Right lobe of liver (tissue), 6 donors: ENCODE measurements at regions of chr14 and their contacts with region 1.

Region 1: GRCh38 chr14:100375963-100376735 is 53.0 kb downstream of the SLC25A47 start:
- DNase-seq: peak; percentile 93 to 97 (median 95)
- ATAC-seq: peak; percentile 84 to 92 (median 92)
- H3K4me3 ChIP-seq: peak within 1 kb of the TSS; percentile 68 to 93 (median 81)
- H3K27ac ChIP-seq: peak within 1 kb of the TSS; percentile 68 to 96 (median 71)
- H3K4me1 ChIP-seq: peaks cover 0 to 18% (median 2%) of the 10 kb centered on the region in 4 donors
- H3K27me3 ChIP-seq: no peaks in the 10 kb centered on the region
- CTCF ChIP-seq: no peak
- POLR2A ChIP-seq: peak; percentile 68

Region 2: GRCh38 chr14:100306420-100307219 is 69.5 kb before region 1 on chr14 and contains the start of gene SLC25A29:
- intact Hi-C with region 1: loop called (anchors 5 to 10 kb)
- DNase-seq: peak; percentile 91 to 94 (median 93)
- ATAC-seq: peak; percentile 82 to 92 (median 89)
- H3K4me3 ChIP-seq: peak within 1 kb of the TSS; percentile 70 to 89 (median 89)
- H3K27ac ChIP-seq: peak within 1 kb of the TSS; percentile 80 to 90 (median 82)
- H3K4me1 ChIP-seq: peaks cover 0 to 21% (median 7%) of the 10 kb centered on the region in 4 donors
- H3K27me3 ChIP-seq: no peaks in the 10 kb centered on the region
- CTCF ChIP-seq: no peak
- POLR2A ChIP-seq: peak; percentile 65
- total RNA-seq, gene SLC25A29: 14.1 to 30.3 (median 18.2) TPM

Region 3: GRCh38 chr14:100406505-100407131 is 30.5 kb after region 1 on chr14:
- intact Hi-C with region 1: no loop called
- DNase-seq: peak in 2 of 3 donors; percentile 47 to 61
- ATAC-seq: peak; percentile 63 to 88 (median 78)
- H3K4me3 ChIP-seq: no peak overlapping the region
- H3K27ac ChIP-seq: no peak overlapping the region
- H3K4me1 ChIP-seq: peaks cover 0 to 26% (median 4%) of the 10 kb centered on the region in 4 donors
- H3K27me3 ChIP-seq: no peaks in the 10 kb centered on the region
- CTCF ChIP-seq: no peak
- POLR2A ChIP-seq: no peak

Region 4: DNA sequence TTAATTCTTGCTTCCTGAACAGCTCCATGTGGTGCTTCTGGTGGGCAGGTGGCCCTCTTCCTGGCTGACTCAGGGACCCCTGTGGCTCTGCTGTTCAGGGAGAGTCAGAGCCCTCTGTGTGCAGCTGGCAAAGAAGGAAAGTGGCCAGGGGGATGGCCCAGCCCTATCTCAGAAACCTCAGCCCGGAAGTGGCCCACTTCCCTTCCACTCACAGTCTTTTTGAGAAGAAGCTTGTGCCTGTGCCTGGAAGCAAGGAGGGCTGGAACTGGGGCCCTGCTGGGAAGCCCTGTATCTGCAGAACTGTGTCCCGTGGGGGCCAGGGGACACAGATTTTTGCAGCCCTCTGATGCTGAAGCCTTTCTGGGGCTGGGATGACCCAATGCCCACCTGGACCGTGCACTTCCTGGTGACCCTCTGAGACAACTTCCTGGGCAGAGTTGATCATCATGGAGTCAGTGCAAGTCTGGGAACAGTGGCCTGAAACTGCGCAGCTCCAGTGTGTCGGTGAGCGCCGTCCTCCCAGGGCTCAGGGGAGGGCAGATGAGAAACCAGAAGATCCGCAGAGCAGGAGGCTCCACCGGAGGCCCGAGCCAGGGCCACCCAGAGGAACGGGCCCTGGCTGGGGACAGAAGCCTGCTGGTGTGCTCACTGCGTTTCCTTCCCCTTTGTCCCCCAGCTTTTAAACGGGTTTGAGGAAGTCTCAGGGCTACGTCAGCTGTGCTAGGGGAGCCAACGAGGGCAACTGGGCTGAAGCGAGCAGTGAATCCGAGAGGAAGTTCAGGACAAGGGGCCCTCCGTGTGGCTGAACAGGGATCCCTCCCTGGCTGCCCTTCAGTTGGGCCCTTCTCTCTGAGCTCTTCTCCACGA is 744.7 kb after region 1 on chr14:
- intact Hi-C with region 1: no loop called
- DNase-seq: peak; percentile 40 to 74 (median 54)
- ATAC-seq: peak; percentile 59 to 84 (median 68)
- H3K4me3 ChIP-seq: peak overlapping the region; percentile 4 to 14 (median 7)
- H3K27ac ChIP-seq: peak overlapping the region in 2 of 3 donors; percentile 24 to 69
- H3K4me1 ChIP-seq: no peaks in the 10 kb centered on the region
- H3K27me3 ChIP-seq: no peaks in the 10 kb centered on the region
- CTCF ChIP-seq: no peak
- POLR2A ChIP-seq: peak; percentile 18